ENCODE measurements at regions of chr22 and their contacts with region 1.

Region 1: DNA sequence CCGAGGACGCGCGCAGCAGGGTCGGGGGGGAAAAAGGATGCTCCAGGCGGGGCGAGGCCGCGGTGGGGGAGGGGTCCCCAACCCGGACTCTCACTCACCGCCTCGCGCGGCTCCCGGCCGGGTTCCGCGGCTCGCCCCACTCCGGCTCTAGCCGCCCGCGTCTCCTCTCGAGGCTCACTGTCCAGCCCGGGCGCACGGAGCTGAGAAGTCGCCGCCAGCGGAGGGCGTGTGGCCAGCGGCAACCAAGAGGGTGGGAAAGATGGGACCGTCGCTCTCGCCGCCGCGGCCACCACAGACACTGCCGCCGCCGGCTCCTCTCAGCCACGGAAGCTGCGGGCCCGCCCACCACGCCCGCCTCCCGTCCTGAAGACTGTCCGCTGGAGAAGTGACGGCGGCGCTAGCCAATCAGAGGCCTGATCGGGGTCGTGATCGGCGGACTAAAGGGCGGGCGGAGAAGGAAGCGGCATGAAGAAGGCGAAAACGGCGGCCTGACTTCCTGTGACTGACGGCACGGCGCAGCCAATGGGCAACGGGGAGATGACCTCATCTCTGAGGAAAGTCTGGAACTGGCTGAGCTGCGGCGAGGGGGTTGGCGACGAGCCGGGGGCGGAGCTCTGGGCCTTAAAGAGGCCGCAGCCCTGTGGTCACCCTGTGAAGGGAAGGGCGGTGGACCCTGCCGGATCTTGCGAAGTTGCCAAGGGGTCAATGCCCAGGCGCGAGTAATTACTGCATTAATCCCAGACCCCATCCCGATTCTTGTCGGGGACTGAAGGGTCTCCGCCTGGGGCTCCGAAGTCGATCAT is at the start of gene MRTFA:
- DNase-seq: peak; percentile 100
- H3K4me3 ChIP-seq: peak within 1 kb of the TSS; percentile 83 to 91
- H3K27ac ChIP-seq: peak within 1 kb of the TSS; percentile 86 to 92
- H3K4me1 ChIP-seq: peaks cover 0 to 12% of the 10 kb centered on the region in 2 donors
- H3K27me3 ChIP-seq: no peaks in the 10 kb centered on the region
- CTCF ChIP-seq: no peak
- total RNA-seq, gene MRTFA: 99.3 TPM

Region 2: DNA sequence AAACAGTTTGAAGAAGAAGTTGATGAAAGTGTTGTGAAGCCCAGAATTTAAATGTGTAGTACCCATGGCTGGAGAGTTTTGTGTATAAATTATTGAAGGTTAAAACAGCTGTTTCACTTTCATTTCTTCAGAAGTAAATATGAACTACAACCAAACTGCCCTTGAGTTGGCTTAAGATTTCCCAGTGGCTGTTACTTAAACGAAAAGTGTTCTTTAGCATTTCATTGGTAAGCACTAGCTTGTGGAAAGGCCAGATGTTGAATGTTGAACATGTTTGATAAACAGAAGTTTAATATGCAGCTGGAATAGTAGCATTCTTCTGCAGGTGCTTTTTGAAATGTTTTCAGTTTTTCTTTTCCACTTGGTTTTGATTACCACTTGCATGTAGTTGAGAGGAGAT is 542.1 kb before region 1 on chr22:
- intact Hi-C with region 1: no loop called
- DNase-seq: no peak
- H3K4me3 ChIP-seq: peak overlapping the region in 1 of 2 donors; percentile 2
- H3K27ac ChIP-seq: no peak overlapping the region
- H3K4me1 ChIP-seq: no peaks in the 10 kb centered on the region
- H3K27me3 ChIP-seq: no peaks in the 10 kb centered on the region
- CTCF ChIP-seq: no peak

Region 3: GRCh38 chr22:40499187-40499753 is 137.3 kb before region 1 on chr22:
- intact Hi-C with region 1: loop called (anchors 5 kb)
- DNase-seq: peak in 1 of 2 donors; percentile 78
- H3K4me3 ChIP-seq: peak overlapping the region in 1 of 2 donors; percentile 33
- H3K27ac ChIP-seq: peak overlapping the region; percentile 68 to 69
- H3K4me1 ChIP-seq: peaks cover 3 to 32% of the 10 kb centered on the region in 2 donors
- H3K27me3 ChIP-seq: no peaks in the 10 kb centered on the region
- CTCF ChIP-seq: no peak

Region 4: DNA sequence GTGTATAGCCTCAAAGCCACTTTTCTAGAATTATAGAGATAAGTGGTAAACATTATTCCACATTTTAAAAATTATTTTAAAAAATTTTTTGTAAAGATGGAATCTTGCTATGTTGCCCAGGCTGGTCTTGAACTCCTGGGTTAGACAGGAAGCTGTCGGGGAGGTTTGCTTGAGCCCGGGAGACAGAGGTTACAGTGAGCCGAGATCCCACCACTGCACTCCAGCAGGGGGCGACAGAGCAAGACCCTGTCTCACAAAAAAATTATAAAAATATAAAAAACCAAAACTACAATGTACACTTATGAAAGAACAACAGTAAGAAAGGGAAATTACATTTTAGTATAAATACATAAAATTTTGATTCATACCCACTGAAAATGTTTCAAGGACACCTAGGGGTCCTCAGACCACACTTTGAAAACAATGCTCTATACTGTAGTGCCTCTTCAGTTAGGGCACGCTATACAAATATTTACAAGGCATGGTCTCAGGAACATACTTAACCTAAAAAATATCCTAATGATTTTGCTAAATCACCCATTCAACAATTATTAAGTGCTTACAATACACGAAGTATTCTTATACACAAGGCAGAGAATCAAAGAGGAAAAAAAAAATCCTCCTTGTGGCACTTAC is 111.2 kb before region 1 on chr22:
- intact Hi-C with region 1: loop called (anchors 5 kb)
- DNase-seq: no peak
- H3K4me3 ChIP-seq: no peak overlapping the region
- H3K27ac ChIP-seq: no peak overlapping the region
- H3K4me1 ChIP-seq: peaks cover 0 to 31% of the 10 kb centered on the region in 2 donors
- H3K27me3 ChIP-seq: no peaks in the 10 kb centered on the region
- CTCF ChIP-seq: peak; percentile 52 to 64 (median 54)

Region 5: GRCh38 chr22:40597526-40598430 is 38.8 kb before region 1 on chr22:
- intact Hi-C with region 1: no loop called
- DNase-seq: no peak
- H3K4me3 ChIP-seq: peak overlapping the region in 1 of 2 donors; percentile 42
- H3K27ac ChIP-seq: peak overlapping the region; percentile 49 to 62
- H3K4me1 ChIP-seq: peaks cover 6 to 42% of the 10 kb centered on the region in 2 donors
- H3K27me3 ChIP-seq: no peaks in the 10 kb centered on the region
- CTCF ChIP-seq: no peak

Region 6: GRCh38 chr22:40660730-40661129 is 24.1 kb after region 1 on chr22:
- intact Hi-C with region 1: no loop called
- DNase-seq: no peak
- H3K4me3 ChIP-seq: no peak overlapping the region
- H3K27ac ChIP-seq: no peak overlapping the region
- H3K4me1 ChIP-seq: peaks cover 7 to 10% of the 10 kb centered on the region in 2 donors
- H3K27me3 ChIP-seq: no peaks in the 10 kb centered on the region
- CTCF ChIP-seq: no peak

Region 7: GRCh38 chr22:40818747-40819598 is 182.4 kb after region 1 on chr22 and contains the start of gene SLC25A17:
- intact Hi-C with region 1: loop called (anchors 1 kb)
- DNase-seq: peak; percentile 32 to 92
- H3K4me3 ChIP-seq: peak within 1 kb of the TSS; percentile 82 to 90
- H3K27ac ChIP-seq: peak within 1 kb of the TSS; percentile 74 to 78
- H3K4me1 ChIP-seq: peaks cover 0 to 13% of the 10 kb centered on the region in 2 donors
- H3K27me3 ChIP-seq: no peaks in the 10 kb centered on the region
- CTCF ChIP-seq: peak in 2 of 3 experiments; percentile 23 to 51
- total RNA-seq, gene SLC25A17: 62.1 TPM

Measured in ascending aorta (tissue), 2 donors.